Gastrocnemius medialis (tissue), 4 donors: ENCODE measurements at regions of chr10 and their contacts with region 1.

Region 1: DNA sequence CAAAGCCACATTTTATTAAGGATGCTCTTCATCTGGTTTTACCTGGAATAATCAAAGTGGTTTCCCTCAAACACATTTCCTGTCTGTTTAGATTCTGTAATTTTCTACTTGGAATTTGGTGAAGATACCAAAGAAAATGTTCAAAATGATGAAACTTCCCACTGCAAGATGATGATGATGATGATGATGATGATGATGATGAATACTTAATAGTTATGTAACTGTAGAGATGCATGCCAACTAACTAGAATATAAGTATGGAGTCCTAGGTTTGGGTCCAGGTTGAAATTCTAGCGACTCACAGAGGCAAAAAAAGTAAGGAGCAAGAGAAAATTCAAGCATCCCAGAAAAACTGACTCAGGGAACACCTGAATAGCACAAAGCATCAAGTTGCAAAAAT is 104.0 kb upstream of the KIAA1217 start:
- DNase-seq: no peak
- ATAC-seq: no peak
- H3K4me3 ChIP-seq: no peak overlapping the region
- H3K27ac ChIP-seq: no peak overlapping the region
- H3K4me1 ChIP-seq: peaks cover 4 to 5% of the 10 kb centered on the region in 2 donors
- H3K27me3 ChIP-seq: no peaks in the 10 kb centered on the region
- CTCF ChIP-seq: no peak
- POLR2A ChIP-seq: no peak

Region 2: DNA sequence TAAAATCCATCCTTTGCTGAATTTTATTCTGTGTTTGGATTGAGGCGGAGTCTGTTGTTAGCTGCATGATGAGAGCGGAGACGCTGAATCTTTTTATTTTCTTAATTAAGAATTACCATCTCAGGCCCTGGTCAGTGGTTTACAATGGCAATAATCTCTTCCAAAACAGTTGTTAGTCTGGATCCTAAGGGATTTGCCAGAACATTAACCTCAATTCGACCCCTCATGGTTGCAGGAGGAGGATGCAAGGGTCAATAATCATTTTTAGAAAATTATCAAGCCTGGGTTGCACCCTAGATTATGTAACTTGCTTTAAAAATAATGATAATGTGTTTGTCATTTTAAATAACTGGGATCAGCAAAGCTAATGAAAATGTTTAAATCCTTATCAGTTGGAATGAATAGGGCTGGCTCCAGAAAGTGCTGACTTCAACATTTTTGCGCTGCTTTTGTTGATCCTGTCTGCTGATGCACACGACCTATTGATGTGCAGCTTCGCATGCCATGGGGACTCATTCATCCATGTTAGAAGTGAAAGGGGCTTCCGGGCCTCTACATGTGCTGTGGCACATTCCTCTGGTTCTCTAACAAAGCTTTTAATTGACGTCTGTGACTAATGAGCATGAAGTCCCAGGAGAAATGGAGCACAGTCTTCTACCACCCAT is 23.3 kb after region 1 on chr10:
- in situ Hi-C with region 1: no loop called
- intact Hi-C with region 1: loop called (anchors 1 kb)
- DNase-seq: no peak
- ATAC-seq: no peak
- H3K4me3 ChIP-seq: no peak overlapping the region
- H3K27ac ChIP-seq: no peak overlapping the region
- H3K4me1 ChIP-seq: peaks cover 9 to 19% of the 10 kb centered on the region in 2 donors
- H3K27me3 ChIP-seq: no peaks in the 10 kb centered on the region
- CTCF ChIP-seq: no peak
- POLR2A ChIP-seq: no peak

Region 3: DNA sequence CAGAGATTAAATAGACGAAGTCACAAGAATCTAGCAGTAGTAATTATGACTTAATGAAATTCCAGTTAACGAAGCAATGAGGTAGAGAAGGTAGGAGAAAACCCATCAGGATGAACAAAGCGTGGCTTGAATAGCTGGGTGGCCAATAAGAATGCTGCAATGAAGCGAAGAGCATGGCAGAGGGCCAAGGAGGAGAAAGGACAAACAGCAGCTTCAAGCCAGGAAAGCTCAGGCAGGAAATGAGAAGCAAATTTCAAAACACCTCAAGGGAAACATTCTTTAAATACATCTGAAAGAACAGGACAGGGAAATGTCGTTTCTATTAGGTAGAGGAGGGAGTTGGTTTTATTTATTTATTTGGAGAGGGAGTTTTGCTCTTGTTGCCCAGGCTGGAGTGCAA is 226.6 kb after region 1 on chr10:
- in situ Hi-C with region 1: no loop called
- intact Hi-C with region 1: no loop called
- DNase-seq: peak; percentile 39 to 75
- ATAC-seq: peak; percentile 63 to 80
- H3K4me3 ChIP-seq: peak overlapping the region in 1 of 4 donors; percentile 7
- H3K27ac ChIP-seq: peak overlapping the region; percentile 28 to 70 (median 54)
- H3K4me1 ChIP-seq: peaks cover 40 to 43% of the 10 kb centered on the region in 2 donors
- H3K27me3 ChIP-seq: no peaks in the 10 kb centered on the region
- CTCF ChIP-seq: no peak
- POLR2A ChIP-seq: no peak